Dorsolateral prefrontal cortex (tissue), 120 donors: ENCODE measurements at regions of chr5 and their contacts with region 1.

Region 1: GRCh38 chr5:149551200-149552037 is at the start of gene CSNK1A1:
- DNase-seq: peak; percentile 93 to 98 (median 96)
- H3K4me3 ChIP-seq: peak within 1 kb of the TSS; percentile 69 to 100 (median 96)
- H3K27ac ChIP-seq: peak within 1 kb of the TSS; percentile 91 to 100 (median 99)
- H3K27me3 ChIP-seq: no peaks in the 10 kb centered on the region
- CTCF ChIP-seq: peak; percentile 52 to 87 (median 73)
- total RNA-seq, gene CSNK1A1: 164 to 228 (median 189) TPM

Region 2: DNA sequence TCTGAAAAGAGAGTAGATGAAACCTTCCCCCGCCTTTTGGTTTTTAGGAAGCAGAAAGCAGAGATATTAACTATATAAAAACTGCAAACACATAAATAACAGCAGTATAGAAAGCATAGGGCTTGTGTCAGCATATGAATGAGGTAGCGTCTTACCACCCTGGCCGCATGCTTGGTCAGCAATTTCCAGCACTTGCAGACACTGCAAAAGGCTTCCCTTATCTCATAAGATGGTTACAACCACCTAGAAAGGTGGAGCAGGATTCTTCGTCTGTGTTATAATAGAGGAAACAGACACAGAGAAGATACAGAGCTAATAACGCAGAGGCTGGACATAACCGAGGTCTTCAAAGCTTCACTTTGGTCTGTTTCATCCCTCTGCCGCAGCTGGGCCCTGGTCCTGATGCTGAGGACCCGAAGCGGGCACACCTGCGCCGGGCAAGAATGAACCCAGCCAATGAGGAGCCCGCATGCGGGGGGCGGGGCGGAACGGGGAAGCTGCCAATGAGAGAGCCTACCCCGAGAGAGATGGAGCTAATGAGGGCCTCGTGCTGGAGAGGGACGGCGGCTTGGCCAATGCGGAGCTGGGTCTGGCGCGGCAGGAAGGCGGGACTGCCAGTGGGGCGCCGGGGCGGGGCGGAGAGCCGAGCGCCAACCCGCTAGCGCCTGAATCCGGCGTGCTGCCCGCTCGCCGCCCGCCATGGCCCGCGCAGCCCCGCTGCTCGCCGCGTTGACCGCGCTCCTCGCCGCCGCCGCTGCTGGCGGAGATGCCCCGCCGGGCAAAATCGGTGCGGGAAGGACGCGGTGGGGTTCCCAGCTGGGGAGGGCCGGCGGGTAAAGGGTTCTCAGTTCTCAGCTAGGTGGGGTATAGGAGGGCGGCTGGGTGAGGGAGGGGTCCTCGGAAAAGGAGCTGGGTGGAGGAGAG is 193.8 kb before region 1 on chr5 and contains the start of gene PCYOX1L:
- intact Hi-C with region 1: loop called (anchors 1 to 2 kb)
- DNase-seq: peak; percentile 95 to 99 (median 98)
- H3K4me3 ChIP-seq: peak within 1 kb of the TSS; percentile 45 to 97 (median 87)
- H3K27ac ChIP-seq: peak within 1 kb of the TSS in 58 of 59 donors; percentile 0 to 93 (median 84)
- H3K27me3 ChIP-seq: no peaks in the 10 kb centered on the region
- CTCF ChIP-seq: peak in 21 of 56 donors; percentile 14 to 55 (median 29)
- total RNA-seq, gene PCYOX1L: 7.2 to 29.4 (median 19.2) TPM

Region 3: GRCh38 chr5:149517461-149518122 is 33.8 kb before region 1 on chr5:
- intact Hi-C with region 1: loop called (anchors 5 kb)
- DNase-seq: peak in 4 of 10 donors; percentile 45 to 59 (median 46)
- H3K4me3 ChIP-seq: peak overlapping the region in 21 of 59 donors; percentile 2 to 36 (median 11)
- H3K27ac ChIP-seq: peak overlapping the region in 50 of 59 donors; percentile 1 to 74 (median 46)
- H3K27me3 ChIP-seq: no peaks in the 10 kb centered on the region
- CTCF ChIP-seq: peak in 31 of 56 donors; percentile 12 to 60 (median 30)

Region 4: DNA sequence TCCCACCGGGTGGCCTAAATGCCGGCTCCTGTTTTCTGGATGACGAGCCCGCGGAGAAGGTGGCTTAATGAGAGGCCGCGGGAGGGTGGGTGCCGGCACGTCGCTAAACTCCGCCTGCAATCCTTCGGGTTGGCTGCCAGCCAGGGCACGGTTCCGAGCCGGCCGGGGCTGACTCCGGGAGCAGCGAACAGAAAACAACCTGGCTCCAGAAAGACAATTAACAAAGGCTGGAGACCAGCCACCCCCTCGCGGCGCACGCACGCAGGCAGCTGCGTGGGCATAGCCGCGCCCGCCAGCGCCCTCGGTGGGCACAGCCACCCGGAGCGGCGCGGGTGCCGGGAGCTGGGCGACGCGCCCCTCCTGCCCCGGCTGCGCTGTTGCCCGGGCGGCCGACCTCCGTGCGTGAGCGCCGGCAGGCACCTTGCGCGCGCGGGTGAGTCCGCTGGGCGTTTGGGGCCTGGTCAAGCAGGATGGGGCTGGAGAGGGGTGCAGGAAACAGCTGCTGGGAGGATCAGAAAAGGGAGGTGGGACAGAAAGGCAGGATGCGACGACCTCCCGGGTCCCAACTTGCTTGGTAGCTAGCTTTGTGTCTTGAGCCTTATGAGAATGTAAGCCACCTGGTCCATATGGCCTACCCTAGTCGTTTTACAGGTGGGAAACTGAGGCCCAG is 29.9 kb after region 1 on chr5 and contains the start of gene ARHGEF37:
- intact Hi-C with region 1: loop called in 1 of 2 experiments (anchors 1 kb)
- DNase-seq: peak; percentile 87 to 95 (median 92)
- H3K4me3 ChIP-seq: peak within 1 kb of the TSS; percentile 39 to 84 (median 70)
- H3K27ac ChIP-seq: peak within 1 kb of the TSS; percentile 73 to 99 (median 96)
- H3K27me3 ChIP-seq: no peaks in the 10 kb centered on the region
- CTCF ChIP-seq: peak in 33 of 56 donors; percentile 5 to 54 (median 31)
- total RNA-seq, gene ARHGEF37: 12.0 to 71.9 (median 27.0) TPM

Region 5: GRCh38 chr5:149618581-149619251 is 67.3 kb after region 1 on chr5:
- intact Hi-C with region 1: loop called in 1 of 2 experiments (anchors 1 kb)
- DNase-seq: peak in 7 of 10 donors; percentile 24 to 77 (median 58)
- H3K4me3 ChIP-seq: no peak overlapping the region
- H3K27ac ChIP-seq: peak overlapping the region in 40 of 59 donors; percentile 0 to 78 (median 54)
- H3K27me3 ChIP-seq: no peaks in the 10 kb centered on the region
- CTCF ChIP-seq: peak in 55 of 56 donors; percentile 19 to 81 (median 70)